ENCODE measurements at regions of chr17 and their contacts with region 1.

Region 1: DNA sequence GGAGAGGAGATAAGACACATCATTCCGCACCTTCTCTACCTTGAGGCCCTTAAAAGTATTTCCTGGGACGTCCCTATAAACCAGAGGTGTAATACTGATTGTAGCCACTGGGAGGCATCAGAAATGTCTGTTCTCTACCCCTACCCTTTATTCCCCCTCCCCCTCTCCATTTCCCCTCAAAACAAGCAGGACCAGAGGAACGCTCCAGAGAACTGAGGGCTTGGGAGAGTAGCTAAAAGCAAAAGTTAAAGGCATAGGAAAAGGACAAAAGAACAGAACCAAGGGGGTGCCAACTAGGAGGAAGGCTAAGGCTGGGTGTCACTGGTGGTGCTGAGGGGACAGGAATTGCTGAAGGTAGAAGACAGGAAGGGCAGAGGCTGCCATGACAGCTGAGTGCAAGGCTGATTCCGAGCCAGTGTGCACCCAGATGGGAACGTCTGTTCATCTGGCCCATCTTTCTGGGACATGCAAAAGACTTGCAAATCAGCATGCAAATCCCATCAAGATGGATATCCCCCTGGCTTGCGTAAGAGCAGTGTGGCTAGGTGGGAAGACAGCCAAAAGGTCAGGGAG is 6.7 kb downstream of the CAMTA2 start:
- DNase-seq: peak in 2 of 3 donors; percentile 53 to 57
- H3K4me3 ChIP-seq: no peak overlapping the region
- H3K4me3 Mint-ChIP-seq: peak overlapping the region in 1 of 2 donors; percentile 1
- H3K27ac ChIP-seq: peak overlapping the region in 1 of 2 donors; percentile 78
- H3K27ac Mint-ChIP-seq: peak overlapping the region; percentile 26 to 85 (median 70)
- H3K4me1 ChIP-seq: peaks cover 56 to 60% of the 10 kb centered on the region in 2 donors
- H3K4me1 Mint-ChIP-seq: peaks cover 64% of the 10 kb centered on the region
- H3K27me3 ChIP-seq: no peaks in the 10 kb centered on the region
- H3K27me3 Mint-ChIP-seq: no peaks in the 10 kb centered on the region
- CTCF ChIP-seq: peak; percentile 91

Region 2: DNA sequence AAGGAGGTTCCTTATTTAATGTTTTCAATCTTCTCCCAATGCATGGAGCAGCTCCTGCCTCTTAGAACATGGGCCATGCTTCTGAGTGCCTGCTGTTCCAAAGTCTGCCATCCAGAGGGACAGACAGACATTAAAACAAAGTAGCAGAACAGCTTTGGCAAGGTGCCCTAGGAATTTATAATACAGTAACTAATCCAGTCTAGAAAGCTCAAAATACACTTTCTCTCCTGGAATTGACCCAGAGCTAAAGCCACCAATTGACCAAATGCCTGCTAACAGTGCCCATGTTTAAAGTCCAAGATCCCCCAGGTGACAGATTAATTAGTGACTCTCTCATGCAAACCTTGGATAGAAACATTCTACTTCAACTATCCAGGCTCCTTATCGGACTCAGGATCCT is 66.7 kb before region 1 on chr17:
- intact Hi-C with region 1: loop called (anchors 5 kb)
- DNase-seq: no peak
- H3K4me3 ChIP-seq: no peak overlapping the region
- H3K4me3 Mint-ChIP-seq: no peak overlapping the region
- H3K27ac ChIP-seq: no peak overlapping the region
- H3K27ac Mint-ChIP-seq: no peak overlapping the region
- H3K4me1 ChIP-seq: peaks cover 4 to 7% of the 10 kb centered on the region in 2 donors
- H3K4me1 Mint-ChIP-seq: no peaks in the 10 kb centered on the region
- H3K27me3 ChIP-seq: no peaks in the 10 kb centered on the region
- H3K27me3 Mint-ChIP-seq: peaks cover 0 to 8% (median 8%) of the 10 kb centered on the region in 3 donors
- CTCF ChIP-seq: no peak

Region 3: GRCh38 chr17:4939796-4940624 is 40.7 kb before region 1 on chr17 and contains the starts of genes RNF167 and SLC25A11:
- intact Hi-C with region 1: loop called in 1 of 2 experiments (anchors 5 kb)
- DNase-seq: peak; percentile 99 to 100 (median 99)
- H3K4me3 ChIP-seq: peak within 1 kb of the TSS; percentile 76 to 94 (median 78)
- H3K4me3 Mint-ChIP-seq: peak within 1 kb of the TSS; percentile 90 to 96
- H3K27ac ChIP-seq: peak within 1 kb of the TSS; percentile 94
- H3K27ac Mint-ChIP-seq: peak within 1 kb of the TSS; percentile 95 to 98 (median 97)
- H3K4me1 ChIP-seq: peaks cover 55 to 61% of the 10 kb centered on the region in 2 donors
- H3K4me1 Mint-ChIP-seq: peaks cover 62% of the 10 kb centered on the region
- H3K27me3 ChIP-seq: no peaks in the 10 kb centered on the region
- H3K27me3 Mint-ChIP-seq: peaks cover 0 to 4% (median 0%) of the 10 kb centered on the region in 3 donors
- CTCF ChIP-seq: no peak
- polyA plus RNA-seq, gene RNF167: 17.2 to 105 (median 20.6) TPM
- polyA plus RNA-seq, gene SLC25A11: 65.2 to 138 (median 111) TPM

Region 4: GRCh38 chr17:5055543-5055942 is 74.8 kb after region 1 on chr17:
- intact Hi-C with region 1: loop called in 1 of 2 experiments (anchors 5 kb)
- DNase-seq: no peak
- H3K4me3 ChIP-seq: no peak overlapping the region
- H3K4me3 Mint-ChIP-seq: no peak overlapping the region
- H3K27ac ChIP-seq: no peak overlapping the region
- H3K27ac Mint-ChIP-seq: no peak overlapping the region
- H3K4me1 ChIP-seq: no peaks in the 10 kb centered on the region
- H3K4me1 Mint-ChIP-seq: no peaks in the 10 kb centered on the region
- H3K27me3 ChIP-seq: peaks cover 0 to 3% of the 10 kb centered on the region in 2 donors
- H3K27me3 Mint-ChIP-seq: peaks cover 4 to 21% (median 17%) of the 10 kb centered on the region in 3 donors
- CTCF ChIP-seq: no peak

Measured in CD14-positive monocyte (primary cell).